ENCODE measurements at regions of chr2 and their contacts with region 1.

Region 1: DNA sequence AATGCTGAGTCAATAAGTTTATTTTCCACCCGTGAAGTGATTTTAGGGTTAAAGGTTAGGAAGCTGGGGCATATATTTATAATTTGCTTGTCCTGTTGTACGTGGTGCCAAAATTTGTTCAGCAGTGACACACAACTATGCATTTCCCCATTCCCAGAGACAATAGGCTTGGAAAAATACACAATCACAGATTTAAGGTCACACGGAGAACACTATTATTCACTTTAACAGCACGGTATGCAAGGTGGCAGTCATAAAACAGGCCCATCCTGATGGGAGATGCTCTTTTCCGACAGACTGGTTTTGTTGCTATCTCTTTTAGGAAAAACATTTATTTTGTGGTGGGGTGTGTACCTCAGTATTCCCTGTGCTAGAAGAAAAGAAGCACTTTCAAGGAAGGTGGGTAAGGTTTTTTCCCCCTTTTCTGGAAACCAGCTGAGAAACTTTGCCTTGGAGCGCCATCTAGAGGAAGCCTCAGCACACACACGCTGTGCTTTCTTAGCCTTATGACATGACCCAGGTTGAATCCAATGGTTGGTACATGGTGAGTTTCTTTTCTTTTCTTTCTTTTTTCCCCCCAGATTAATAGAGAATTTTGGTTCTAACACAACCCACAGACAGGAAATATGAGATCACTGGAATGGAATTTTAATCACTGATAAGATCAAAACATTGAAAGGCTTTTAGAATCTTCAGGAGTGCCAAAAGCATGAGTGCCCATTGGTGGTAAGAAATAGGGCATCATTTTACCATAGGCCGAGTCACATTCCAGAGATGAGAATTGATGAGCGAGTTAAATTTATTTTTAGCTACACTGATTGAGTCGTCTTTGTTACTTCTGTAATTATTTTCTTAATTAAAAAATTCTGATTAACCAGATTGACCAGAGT is 332.1 kb downstream of the AGPS start:
- DNase-seq: peak in 1 of 2 donors; percentile 14
- ATAC-seq: peak in 1 of 2 donors; percentile 73
- H3K4me3 ChIP-seq: no peak overlapping the region
- H3K27ac ChIP-seq: no peak overlapping the region
- H3K4me1 ChIP-seq: peaks cover 0 to 10% of the 10 kb centered on the region in 2 donors
- H3K27me3 ChIP-seq: no peaks in the 10 kb centered on the region
- CTCF ChIP-seq: peak; percentile 51 to 81 (median 78)
- POLR2A ChIP-seq: no peak

Region 2: GRCh38 chr2:177489719-177490301 is 234.8 kb before region 1 on chr2:
- in situ Hi-C with region 1: loop called in 2 of 4 experiments (anchors 25 kb)
- intact Hi-C with region 1: loop called (anchors 5 kb)
- DNase-seq: no peak
- ATAC-seq: no peak
- H3K4me3 ChIP-seq: no peak overlapping the region
- H3K27ac ChIP-seq: no peak overlapping the region
- H3K4me1 ChIP-seq: no peaks in the 10 kb centered on the region
- H3K27me3 ChIP-seq: no peaks in the 10 kb centered on the region
- CTCF ChIP-seq: peak in 4 of 5 experiments; percentile 10 to 38 (median 26)
- POLR2A ChIP-seq: no peak

Region 3: GRCh38 chr2:177882501-177882900 is 157.9 kb after region 1 on chr2:
- in situ Hi-C with region 1: no loop called
- intact Hi-C with region 1: no loop called
- DNase-seq: peak; percentile 46 to 55
- ATAC-seq: peak; percentile 80 to 89
- H3K4me3 ChIP-seq: no peak overlapping the region
- H3K27ac ChIP-seq: peak overlapping the region; percentile 48 to 89 (median 56)
- H3K4me1 ChIP-seq: peaks cover 41 to 81% of the 10 kb centered on the region in 2 donors
- H3K27me3 ChIP-seq: no peaks in the 10 kb centered on the region
- CTCF ChIP-seq: no peak
- POLR2A ChIP-seq: no peak